ENCODE measurements at regions of chr12 and their contacts with region 1.

Region 1: DNA sequence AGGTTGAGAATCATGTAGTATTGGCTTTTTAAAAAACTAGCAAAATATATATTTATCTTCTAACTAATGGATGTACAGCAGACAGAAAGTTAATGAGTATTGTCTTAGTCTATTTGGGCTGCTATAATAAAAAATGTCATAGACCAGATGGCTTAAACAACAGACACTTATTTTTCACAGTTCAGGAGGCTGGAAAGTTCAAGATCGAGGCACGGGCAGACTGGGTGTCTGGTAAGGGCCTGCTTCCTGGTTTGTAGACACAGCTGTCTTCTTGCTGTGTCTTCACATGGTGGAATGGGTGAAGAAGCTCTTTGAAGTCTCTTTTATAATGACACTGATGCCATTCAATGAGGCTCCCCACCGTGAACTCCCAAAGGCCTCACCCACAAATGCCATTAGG is 70.1 kb upstream of the KRR1 start:
- DNase-seq: no peak
- ATAC-seq: no peak; the same call in 2 of the 3 replicates
- H3K4me3 ChIP-seq: no peak overlapping the region
- H3K27ac ChIP-seq: no peak overlapping the region
- H3K4me1 ChIP-seq: no peaks in the 10 kb centered on the region
- H3K27me3 ChIP-seq: no peaks in the 10 kb centered on the region
- CTCF ChIP-seq: no peak
- EP300 ChIP-seq: no peak
- POLR2A ChIP-seq: no peak
- RAD21 ChIP-seq: no peak

Region 2: DNA sequence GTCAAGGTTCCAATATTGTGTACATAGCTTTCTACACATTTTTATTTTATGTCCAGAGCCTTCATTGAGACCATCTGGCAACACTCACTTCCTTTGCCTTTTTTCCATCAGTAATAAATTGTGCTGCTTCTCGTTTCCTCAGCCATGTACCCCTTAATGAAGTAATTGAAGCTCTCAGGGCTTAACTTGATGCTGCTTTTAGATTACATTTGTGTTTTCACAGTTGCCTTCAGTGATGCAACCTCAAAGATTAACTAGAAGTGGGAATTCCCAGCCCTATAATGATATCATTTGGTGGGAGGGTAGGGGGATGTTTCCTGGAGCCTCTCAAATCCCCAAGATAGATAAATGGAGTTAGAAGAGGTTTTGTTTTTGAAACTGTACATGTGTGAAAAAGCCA is 10.1 kb after region 1 on chr12:
- CTCF ChIA-PET with region 1: interaction called, 7 read pairs
- POLR2A ChIA-PET with region 1: no interaction called
- RAD21 ChIA-PET with region 1: no interaction called
- SMC1A ChIA-PET with region 1: interaction called, 11 read pairs
- in situ Hi-C with region 1: no loop called
- intact Hi-C with region 1: no loop called
- DNase-seq: no peak
- ATAC-seq: no peak
- H3K4me3 ChIP-seq: no peak overlapping the region
- H3K27ac ChIP-seq: no peak overlapping the region
- H3K4me1 ChIP-seq: no peaks in the 10 kb centered on the region
- H3K27me3 ChIP-seq: no peaks in the 10 kb centered on the region
- CTCF ChIP-seq: no peak
- EP300 ChIP-seq: no peak
- POLR2A ChIP-seq: no peak
- RAD21 ChIP-seq: no peak

Region 3: DNA sequence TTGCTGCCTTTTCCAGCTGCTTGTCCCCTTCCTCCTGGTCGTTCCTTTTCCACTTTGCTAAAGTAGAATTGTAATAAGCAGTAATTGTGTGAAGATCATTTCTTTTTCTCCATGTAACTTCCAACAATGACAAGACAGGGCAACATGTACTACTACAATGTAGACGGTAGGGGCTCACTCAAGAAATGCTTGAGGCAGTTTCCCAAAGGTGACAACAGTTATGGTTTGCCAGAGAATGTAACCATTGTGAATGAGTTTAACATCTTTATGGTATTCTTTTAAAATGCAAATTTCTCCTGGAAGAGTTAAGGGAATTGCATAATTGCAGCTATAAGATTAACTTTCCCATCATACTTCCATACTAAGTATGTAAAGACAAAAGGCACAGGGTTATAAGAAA is 473.9 kb after region 1 on chr12:
- CTCF ChIA-PET with region 1: no interaction called
- POLR2A ChIA-PET with region 1: no interaction called
- RAD21 ChIA-PET with region 1: no interaction called
- SMC1A ChIA-PET with region 1: no interaction called
- in situ Hi-C with region 1: no loop called
- intact Hi-C with region 1: no loop called
- DNase-seq: no peak
- ATAC-seq: no peak
- H3K4me3 ChIP-seq: no peak overlapping the region
- H3K27ac ChIP-seq: no peak overlapping the region
- H3K4me1 ChIP-seq: no peaks in the 10 kb centered on the region
- H3K27me3 ChIP-seq: no peaks in the 10 kb centered on the region
- CTCF ChIP-seq: no peak
- EP300 ChIP-seq: no peak
- POLR2A ChIP-seq: no peak
- RAD21 ChIP-seq: no peak